Activated T-helper 1 cell treated with anti-CD3 and anti-CD28 coated beads, Interleukin-12 subunit alpha, Interleukin-12 subunit beta, Interleukin-2, Interleukin-4 antibody, amounts not matched to agents 30 ng/mL and 10 ng/mL and 1 ng/mL, durations not matched to agents 14 hours and 24 hours and 36 hours (primary cell): ENCODE measurements at regions of chr10 and their contacts with region 1.

Region 1: DNA sequence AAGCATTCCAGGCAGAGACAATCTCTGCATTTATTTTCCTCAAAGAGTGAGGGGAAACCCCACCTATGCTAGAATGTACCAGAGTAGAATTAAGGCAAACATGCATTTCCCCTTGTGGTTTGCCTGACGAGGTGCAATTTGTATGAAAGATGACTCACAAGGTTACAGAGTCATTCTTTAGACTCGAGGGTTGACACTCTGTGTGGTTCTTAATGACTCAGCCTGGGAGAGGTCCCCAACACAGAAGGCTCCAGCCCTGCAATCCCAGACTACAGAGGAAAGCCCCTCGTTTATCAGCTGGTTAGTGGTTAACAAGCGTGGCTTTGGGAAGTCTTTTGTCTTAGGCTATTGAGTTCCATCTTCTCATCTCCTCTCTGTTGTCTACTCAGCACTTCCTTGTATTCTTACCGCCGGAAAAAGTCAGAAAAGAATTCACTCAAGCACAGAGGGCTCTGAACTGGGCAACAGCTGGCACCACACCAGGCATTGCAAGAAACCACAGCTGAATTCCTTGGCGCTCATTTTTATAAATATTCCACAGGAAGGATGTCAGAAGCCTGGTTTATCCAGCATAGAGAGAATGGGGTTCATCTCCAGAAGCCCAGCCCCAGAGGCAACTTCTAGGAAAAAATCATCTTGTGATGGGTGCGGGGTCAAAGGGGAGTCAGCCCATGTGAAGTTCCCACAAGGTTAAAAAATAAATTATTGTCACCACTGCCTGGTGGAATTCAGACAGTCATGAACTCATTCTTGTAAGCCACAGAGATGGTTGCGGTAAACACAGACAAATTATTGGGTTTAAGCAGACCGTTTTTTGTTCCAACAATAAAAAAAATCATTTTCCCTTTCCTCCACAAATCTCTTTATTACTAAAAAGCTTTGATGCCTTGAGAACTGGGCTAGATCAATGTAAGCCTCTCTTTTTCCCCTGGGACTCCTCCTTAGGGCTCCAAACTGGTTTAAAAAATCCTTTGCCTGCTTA is 24.5 kb upstream of the SVIL start:
- DNase-seq: peak; percentile 73
- H3K4me3 Mint-ChIP-seq: peak overlapping the region; percentile 2
- H3K27ac Mint-ChIP-seq: peak overlapping the region; percentile 37
- H3K4me1 Mint-ChIP-seq: peaks cover 26% of the 10 kb centered on the region
- H3K27me3 Mint-ChIP-seq: peaks cover 48% of the 10 kb centered on the region

Region 2: GRCh38 chr10:28334296-28334695 is 1325.0 kb before region 1 on chr10:
- intact Hi-C with region 1: loop called (anchors 10 kb)
- DNase-seq: peak; percentile 66
- H3K4me3 Mint-ChIP-seq: peak overlapping the region; percentile 81
- H3K27ac Mint-ChIP-seq: peak overlapping the region; percentile 99
- H3K4me1 Mint-ChIP-seq: peaks cover 67% of the 10 kb centered on the region
- H3K27me3 Mint-ChIP-seq: peaks cover 21% of the 10 kb centered on the region

Region 3: DNA sequence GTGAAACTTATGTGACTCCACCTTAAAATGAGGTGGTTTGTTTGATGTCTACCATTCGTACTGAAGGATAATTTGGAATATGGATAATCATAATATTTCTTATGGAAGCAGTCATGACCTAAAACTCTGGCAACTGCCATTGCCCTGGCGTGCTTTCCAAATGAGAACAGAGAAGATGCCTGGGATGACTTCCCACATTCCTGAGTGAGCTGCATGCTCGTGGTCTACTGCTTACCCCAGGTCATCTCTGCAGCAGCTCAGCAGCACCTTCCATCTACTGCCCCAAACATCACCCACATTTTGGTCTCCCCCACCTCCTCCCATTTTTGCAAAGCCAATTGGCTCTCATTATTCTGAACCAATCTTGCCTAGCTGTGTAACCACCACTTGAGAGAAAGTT is 330.3 kb before region 1 on chr10:
- intact Hi-C with region 1: no loop called
- DNase-seq: no peak
- H3K4me3 Mint-ChIP-seq: no peak overlapping the region
- H3K27ac Mint-ChIP-seq: no peak overlapping the region
- H3K4me1 Mint-ChIP-seq: no peaks in the 10 kb centered on the region
- H3K27me3 Mint-ChIP-seq: peaks cover 3% of the 10 kb centered on the region

Region 4: DNA sequence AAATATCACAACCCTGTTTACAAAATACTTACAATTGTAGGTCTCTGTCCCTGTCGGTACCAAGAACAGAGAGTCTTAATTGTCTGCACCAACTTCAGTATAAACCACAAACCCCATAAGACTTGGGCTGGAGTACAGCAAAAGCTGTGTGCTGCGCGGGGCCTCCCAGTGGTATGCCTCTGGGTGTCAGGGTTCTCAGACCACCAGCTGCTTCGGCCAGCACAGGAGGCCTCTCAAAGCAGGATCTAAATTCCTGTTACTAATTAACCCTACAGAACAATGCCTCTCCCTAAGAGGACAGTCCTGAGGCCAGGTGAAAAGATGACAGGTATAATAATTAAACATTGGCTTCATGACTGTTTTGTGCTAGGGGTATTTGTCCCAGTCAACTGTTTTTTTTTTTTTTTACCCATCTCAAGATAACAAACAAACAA is 23.5 kb before region 1 on chr10:
- intact Hi-C with region 1: loop called (anchors 1 kb)
- DNase-seq: no peak
- H3K4me3 Mint-ChIP-seq: no peak overlapping the region
- H3K27ac Mint-ChIP-seq: no peak overlapping the region
- H3K4me1 Mint-ChIP-seq: peaks cover 32% of the 10 kb centered on the region
- H3K27me3 Mint-ChIP-seq: peaks cover 2% of the 10 kb centered on the region

Region 5: DNA sequence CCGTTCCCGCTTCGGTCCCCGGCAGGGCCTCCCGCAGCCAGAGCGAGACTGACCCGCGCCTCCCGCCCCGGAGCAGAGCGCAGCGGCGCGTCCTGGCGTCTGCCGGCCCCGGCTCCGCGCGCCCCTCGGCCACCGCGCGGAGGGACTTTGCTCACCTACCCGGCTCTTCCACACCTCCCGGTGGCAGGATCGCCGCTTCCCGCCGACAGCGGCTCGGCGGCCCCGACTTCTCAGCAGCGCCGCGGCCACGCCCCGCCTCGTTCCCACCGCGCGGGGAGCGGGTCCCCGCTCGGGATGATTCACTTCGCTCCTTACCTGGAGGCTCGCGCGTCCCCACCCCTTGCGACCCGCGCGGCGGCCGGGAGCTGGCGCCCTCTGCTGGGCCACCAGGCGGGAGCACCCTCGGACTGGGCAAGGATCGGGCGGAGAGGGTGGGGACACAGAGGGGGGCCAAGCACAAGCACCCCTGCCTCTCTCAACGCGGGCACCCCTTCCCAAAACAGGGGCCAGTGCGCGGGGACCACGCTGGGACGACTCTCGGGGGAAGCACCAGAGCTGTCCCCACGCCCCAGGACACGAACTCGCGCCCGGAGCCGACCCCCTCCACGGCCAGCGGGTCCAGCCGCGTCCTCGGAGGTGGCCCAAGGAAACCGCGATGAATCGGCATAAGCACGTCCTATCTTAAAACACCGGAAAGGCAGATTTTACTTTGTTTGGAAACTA is 76.5 kb after region 1 on chr10:
- intact Hi-C with region 1: loop called (anchors 1 kb)
- DNase-seq: peak; percentile 79
- H3K4me3 Mint-ChIP-seq: peak overlapping the region; percentile 80
- H3K27ac Mint-ChIP-seq: peak overlapping the region; percentile 67
- H3K4me1 Mint-ChIP-seq: peaks cover 10% of the 10 kb centered on the region
- H3K27me3 Mint-ChIP-seq: peaks cover 45% of the 10 kb centered on the region

Region 6: DNA sequence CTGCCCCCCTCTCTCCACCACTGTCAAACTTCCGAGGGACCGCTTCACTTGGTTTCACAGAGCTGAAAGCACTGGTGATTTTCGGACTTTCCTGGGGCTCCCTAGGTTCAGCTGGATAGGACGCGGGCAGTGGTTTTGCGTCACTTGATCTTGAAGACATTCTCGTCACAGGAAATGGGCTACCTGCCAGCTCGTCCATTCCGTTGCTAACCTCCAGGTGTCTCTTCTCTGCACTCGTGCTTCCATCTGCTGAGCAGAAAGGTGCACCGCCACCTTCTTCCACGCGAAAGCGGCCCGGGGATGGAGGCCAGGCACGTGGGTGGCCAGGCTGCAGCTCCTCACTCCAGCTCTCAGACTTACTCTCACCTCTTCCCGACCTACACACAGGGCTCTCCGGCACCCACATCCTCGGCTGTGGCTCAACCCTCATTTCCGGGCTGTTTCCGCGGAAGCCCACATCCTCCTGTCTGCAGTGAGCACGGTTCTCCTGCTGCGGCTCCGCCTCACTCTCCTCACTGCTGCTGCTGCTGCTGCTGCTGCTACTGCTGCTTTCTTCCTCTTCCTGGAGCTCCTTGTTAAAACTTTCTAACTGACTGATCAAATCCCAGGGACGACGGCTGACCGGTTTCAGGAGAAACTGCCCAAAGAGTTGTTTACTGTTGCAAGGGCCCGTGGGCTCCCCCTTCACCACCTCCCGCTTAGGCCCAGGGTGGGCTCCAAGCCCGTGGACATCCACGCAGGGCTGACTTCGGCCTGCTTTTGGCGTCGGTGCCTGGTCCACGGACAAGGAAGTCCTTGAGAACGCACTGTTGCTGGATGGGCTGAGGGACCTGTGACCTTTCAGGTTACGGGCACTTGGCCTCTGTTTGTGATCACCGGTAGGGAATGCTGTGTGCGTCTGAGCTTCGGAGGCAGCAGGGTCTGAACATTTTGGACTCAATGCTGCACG is 368.1 kb after region 1 on chr10:
- intact Hi-C with region 1: loop called (anchors 1 kb)
- DNase-seq: peak; percentile 93
- H3K4me3 Mint-ChIP-seq: peak overlapping the region; percentile 73
- H3K27ac Mint-ChIP-seq: peak overlapping the region; percentile 93
- H3K4me1 Mint-ChIP-seq: peaks cover 45% of the 10 kb centered on the region
- H3K27me3 Mint-ChIP-seq: peaks cover 22% of the 10 kb centered on the region